ENCODE measurements at regions of chr1 and their contacts with region 1.

Region 1: DNA sequence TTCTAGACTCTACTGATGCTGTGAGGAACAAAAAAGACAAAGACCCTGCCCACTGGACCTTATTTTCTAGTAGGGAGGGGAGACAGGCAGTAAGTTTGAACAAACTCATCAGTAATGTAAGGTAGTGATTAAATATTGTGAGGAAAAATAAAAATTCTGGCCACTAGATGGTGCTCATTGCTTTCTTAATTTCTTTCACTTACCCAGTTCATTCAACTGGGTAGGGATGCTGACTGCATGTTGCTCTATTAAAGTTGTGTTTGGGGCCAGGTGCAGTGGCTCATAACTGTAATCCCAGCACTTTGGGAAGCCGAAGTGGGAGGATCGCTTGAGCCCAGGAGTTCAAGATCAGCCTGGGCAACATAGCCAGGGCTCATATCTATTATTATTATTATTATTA is 6.3 kb upstream of the KYAT3 start:
- DNase-seq: no peak
- H3K4me3 Mint-ChIP-seq: no peak overlapping the region
- H3K27ac Mint-ChIP-seq: no peak overlapping the region
- H3K4me1 Mint-ChIP-seq: peaks cover 25% of the 10 kb centered on the region
- H3K27me3 Mint-ChIP-seq: no peaks in the 10 kb centered on the region

Region 2: GRCh38 chr1:89085781-89086180 is 87.1 kb after region 1 on chr1:
- intact Hi-C with region 1: loop called (anchors 1 kb)
- DNase-seq: peak; percentile 47
- H3K4me3 Mint-ChIP-seq: no peak overlapping the region
- H3K27ac Mint-ChIP-seq: no peak overlapping the region
- H3K4me1 Mint-ChIP-seq: peaks cover 8% of the 10 kb centered on the region
- H3K27me3 Mint-ChIP-seq: peaks cover 2% of the 10 kb centered on the region